CD4-positive, alpha-beta memory T cell (primary cell): ENCODE measurements at regions of chr3 and their contacts with region 1.

Region 1: DNA sequence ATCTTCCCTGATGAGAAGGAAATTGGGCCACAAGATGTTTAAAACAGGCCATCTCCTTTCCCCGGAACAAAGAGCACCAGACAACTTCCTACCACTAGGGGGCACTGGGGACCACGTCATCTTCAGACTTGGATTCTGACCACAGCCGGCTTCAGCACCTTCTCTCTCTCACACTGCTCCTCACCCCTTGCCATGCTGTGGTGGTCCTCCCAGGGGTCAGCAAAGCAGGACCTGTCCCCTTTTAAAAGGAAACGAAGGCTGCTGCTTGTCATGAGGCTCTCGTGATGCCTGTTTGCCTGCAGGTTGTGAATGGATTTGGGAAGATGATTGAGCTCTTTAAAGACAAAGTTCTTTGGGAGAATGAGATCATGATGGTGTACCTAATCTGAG is 16.2 kb downstream of the RFT1 start:
- DNase-seq: peak; percentile 75 to 81 (median 78)
- H3K4me3 ChIP-seq: no peak overlapping the region
- H3K4me3 Mint-ChIP-seq: no peak overlapping the region
- H3K27ac ChIP-seq: no peak overlapping the region
- H3K27ac Mint-ChIP-seq: no peak overlapping the region
- H3K4me1 ChIP-seq: peaks cover 13% of the 10 kb centered on the region
- H3K4me1 Mint-ChIP-seq: peaks cover 2 to 13% (median 9%) of the 10 kb centered on the region in 4 donors
- H3K27me3 ChIP-seq: no peaks in the 10 kb centered on the region
- H3K27me3 Mint-ChIP-seq: no peaks in the 10 kb centered on the region

Region 2: GRCh38 chr3:51819709-51820406 is 1294.1 kb before region 1 on chr3:
- CTCF ChIA-PET with region 1: no interaction called
- POLR2A ChIA-PET with region 1: no interaction called
- intact Hi-C with region 1: no loop called
- DNase-seq: no peak
- H3K4me3 ChIP-seq: no peak overlapping the region
- H3K4me3 Mint-ChIP-seq: no peak overlapping the region
- H3K27ac ChIP-seq: no peak overlapping the region
- H3K27ac Mint-ChIP-seq: peak overlapping the region in 2 of 7 donors; percentile 20 to 39
- H3K4me1 ChIP-seq: peaks cover 11% of the 10 kb centered on the region
- H3K4me1 Mint-ChIP-seq: peaks cover 10 to 18% (median 11%) of the 10 kb centered on the region in 4 donors
- H3K27me3 ChIP-seq: no peaks in the 10 kb centered on the region
- H3K27me3 Mint-ChIP-seq: peaks cover 23 to 31% of the 10 kb centered on the region in 2 donors

Region 3: GRCh38 chr3:53130179-53131061 is 16.4 kb after region 1 on chr3 and contains the start of gene RFT1:
- CTCF ChIA-PET with region 1: interaction called, 51 read pairs
- POLR2A ChIA-PET with region 1: interaction called, 6 read pairs
- intact Hi-C with region 1: loop called (anchors 1 kb)
- DNase-seq: peak; percentile 96 to 98 (median 97)
- H3K4me3 ChIP-seq: peak within 1 kb of the TSS; percentile 66 to 77
- H3K4me3 Mint-ChIP-seq: peak within 1 kb of the TSS; percentile 88 to 93 (median 91)
- H3K27ac ChIP-seq: peak within 1 kb of the TSS; percentile 83
- H3K27ac Mint-ChIP-seq: peak within 1 kb of the TSS; percentile 96 to 100 (median 99)
- H3K4me1 ChIP-seq: peaks cover 20% of the 10 kb centered on the region
- H3K4me1 Mint-ChIP-seq: peaks cover 18 to 31% (median 25%) of the 10 kb centered on the region in 4 donors
- H3K27me3 ChIP-seq: no peaks in the 10 kb centered on the region
- H3K27me3 Mint-ChIP-seq: no peaks in the 10 kb centered on the region
- total RNA-seq, gene RFT1: 25.3 to 28.4 TPM

Region 4: DNA sequence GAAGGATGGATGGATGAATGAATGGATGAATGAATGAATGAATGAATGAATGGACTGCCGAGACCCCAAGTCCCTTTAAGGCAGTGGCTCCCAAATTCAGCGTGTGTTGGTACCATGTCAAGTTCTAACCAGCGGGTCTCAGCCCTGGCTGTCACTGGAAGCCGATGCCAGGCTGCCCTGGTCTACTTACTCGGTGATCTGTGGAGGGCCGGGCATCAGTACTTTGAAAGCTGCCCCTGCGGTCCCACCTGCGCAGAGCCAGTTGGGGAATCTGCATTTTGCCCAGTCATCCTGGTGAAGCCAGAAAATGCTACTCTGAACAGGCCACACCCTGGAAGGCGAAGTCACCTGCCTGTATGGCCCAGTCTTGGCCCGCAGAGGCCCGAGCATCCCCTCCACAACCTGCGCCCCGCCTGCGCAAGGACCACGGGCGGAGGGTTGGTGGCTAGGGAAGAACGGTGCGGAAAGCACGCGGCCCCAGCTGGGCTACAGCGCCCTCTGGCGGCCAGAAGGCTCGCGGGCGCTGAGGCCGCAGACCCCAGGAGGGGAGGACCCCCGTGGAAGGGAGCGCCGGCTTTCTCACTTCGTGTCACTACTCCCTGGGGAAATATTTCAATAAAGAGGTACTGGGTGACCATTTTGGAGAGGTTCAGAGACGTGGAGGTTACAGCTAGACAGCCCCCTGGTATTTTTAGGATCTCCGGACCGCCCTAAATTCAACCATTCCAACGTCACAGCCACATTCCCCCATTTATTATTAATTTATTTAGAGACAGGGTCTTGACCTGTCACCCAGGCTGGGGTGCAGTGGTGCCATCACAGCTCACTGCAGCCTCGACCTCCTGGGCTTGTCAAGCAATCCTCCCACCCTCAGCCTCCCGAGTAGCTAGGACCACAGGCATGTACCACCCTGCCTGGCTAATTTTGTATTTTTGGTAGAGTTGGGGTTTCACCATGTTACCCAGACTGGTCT is 81.9 kb after region 1 on chr3:
- CTCF ChIA-PET with region 1: interaction called, 254 read pairs
- POLR2A ChIA-PET with region 1: interaction called, 4 read pairs
- intact Hi-C with region 1: loop called (anchors 1 kb)
- DNase-seq: peak; percentile 43 to 63 (median 49)
- H3K4me3 ChIP-seq: no peak overlapping the region
- H3K4me3 Mint-ChIP-seq: peak overlapping the region in 1 of 8 donors; percentile 18
- H3K27ac ChIP-seq: no peak overlapping the region
- H3K27ac Mint-ChIP-seq: peak overlapping the region in 2 of 7 donors; percentile 53 to 73
- H3K4me1 ChIP-seq: peaks cover 8% of the 10 kb centered on the region
- H3K4me1 Mint-ChIP-seq: peaks cover 2 to 9% (median 6%) of the 10 kb centered on the region in 4 donors
- H3K27me3 ChIP-seq: no peaks in the 10 kb centered on the region
- H3K27me3 Mint-ChIP-seq: peaks cover 0 to 5% of the 10 kb centered on the region in 2 donors

Region 5: GRCh38 chr3:53293867-53294266 is 179.9 kb after region 1 on chr3:
- CTCF ChIA-PET with region 1: no interaction called
- POLR2A ChIA-PET with region 1: no interaction called
- intact Hi-C with region 1: loop called (anchors 5 kb)
- DNase-seq: no peak
- H3K4me3 ChIP-seq: no peak overlapping the region
- H3K4me3 Mint-ChIP-seq: no peak overlapping the region
- H3K27ac ChIP-seq: no peak overlapping the region
- H3K27ac Mint-ChIP-seq: peak overlapping the region in 4 of 7 donors; percentile 11 to 32 (median 22)
- H3K4me1 ChIP-seq: no peaks in the 10 kb centered on the region
- H3K4me1 Mint-ChIP-seq: peaks cover 0 to 3% (median 0%) of the 10 kb centered on the region in 4 donors
- H3K27me3 ChIP-seq: no peaks in the 10 kb centered on the region
- H3K27me3 Mint-ChIP-seq: no peaks in the 10 kb centered on the region